ENCODE measurements at regions of chr10 and their contacts with region 1.

Region 1: GRCh38 chr10:93080350-93081046 is 6.8 kb downstream of the CYP26A1 start:
- DNase-seq: peak; percentile 37
- ATAC-seq: peak; percentile 92
- H3K4me3 ChIP-seq: no peak overlapping the region
- H3K27ac ChIP-seq: no peak overlapping the region
- H3K4me1 ChIP-seq: 0 out of 2 replicates have a peak, but pooled peaks cover 2% of the 10 kb centered on the region
- H3K27me3 ChIP-seq: peaks cover 25% of the 10 kb centered on the region
- CTCF ChIP-seq: peak; percentile 79
- POLR2A ChIP-seq: no peak
- RAD21 ChIP-seq: peak; percentile 83

Region 2: DNA sequence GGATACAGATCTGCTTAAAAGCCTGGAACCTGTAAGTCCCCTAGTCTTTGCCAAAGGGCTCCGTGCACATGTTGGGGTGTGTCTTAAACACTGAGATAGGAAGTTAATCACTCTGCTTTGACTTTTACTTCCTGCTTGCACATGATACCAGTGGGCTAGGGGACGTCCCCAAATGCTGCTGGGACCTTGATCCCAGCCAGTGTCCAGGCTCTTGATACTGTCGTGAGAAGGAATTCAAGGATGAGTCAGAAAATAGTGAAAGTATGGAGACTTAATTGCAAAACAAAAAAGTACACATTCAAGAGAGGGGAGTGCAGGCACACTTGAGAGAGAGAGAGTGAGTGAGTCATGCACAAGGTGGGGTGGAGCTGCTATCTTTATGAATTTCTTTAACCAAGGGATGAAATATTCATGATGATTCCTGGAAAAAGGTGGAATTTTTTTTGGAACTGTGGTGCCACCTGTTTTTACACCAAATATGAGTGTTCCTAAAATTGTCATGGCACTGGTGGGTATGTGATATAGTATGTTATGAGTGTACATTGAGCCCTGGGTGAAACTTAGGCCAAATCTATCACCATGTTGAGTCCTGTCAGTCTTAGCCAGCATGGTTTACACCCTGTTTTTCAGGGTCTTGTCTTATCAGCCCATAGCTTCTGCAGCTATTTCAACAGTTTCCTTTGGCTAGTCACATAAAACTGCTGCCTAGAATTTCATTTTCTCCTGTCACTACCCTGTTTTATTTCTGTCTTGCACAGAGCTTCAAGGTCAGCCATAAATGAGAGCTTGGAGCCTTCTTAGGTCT is 108.2 kb before region 1 on chr10:
- CTCF ChIA-PET with region 1: no interaction called
- POLR2A ChIA-PET with region 1: no interaction called
- dilution Hi-C with region 1: no loop called
- in situ Hi-C with region 1: no loop called
- intact Hi-C with region 1: no loop called
- DNase-seq: peak; percentile 90
- ATAC-seq: peak; percentile 91
- H3K4me3 ChIP-seq: no peak overlapping the region
- H3K27ac ChIP-seq: peak overlapping the region; percentile 16
- H3K4me1 ChIP-seq: peaks cover 15% of the 10 kb centered on the region
- H3K27me3 ChIP-seq: no peaks in the 10 kb centered on the region
- CTCF ChIP-seq: no peak
- POLR2A ChIP-seq: no peak
- RAD21 ChIP-seq: no peak

Region 3: DNA sequence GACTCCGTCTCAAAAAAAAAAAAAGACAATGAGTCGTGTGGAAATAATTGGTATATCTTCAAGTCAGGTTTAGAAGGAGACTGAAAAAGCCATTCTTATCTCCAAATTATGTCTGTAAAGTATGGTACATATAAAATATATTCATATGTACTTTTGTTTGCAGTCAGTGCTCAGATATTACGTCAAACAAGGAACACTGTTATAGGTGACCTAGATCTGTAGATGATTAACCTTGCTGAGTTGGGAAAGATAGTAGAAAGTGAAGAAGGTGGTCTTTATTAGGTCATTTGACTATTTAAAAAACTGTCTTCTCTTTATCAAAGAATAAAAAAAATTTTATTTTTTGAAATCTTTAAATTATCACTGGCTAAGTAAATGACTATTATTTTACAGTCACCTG is 64.8 kb before region 1 on chr10:
- CTCF ChIA-PET with region 1: no interaction called
- POLR2A ChIA-PET with region 1: no interaction called
- dilution Hi-C with region 1: no loop called
- in situ Hi-C with region 1: no loop called
- intact Hi-C with region 1: no loop called
- DNase-seq: no peak
- ATAC-seq: no peak
- H3K4me3 ChIP-seq: no peak overlapping the region
- H3K27ac ChIP-seq: no peak overlapping the region
- H3K4me1 ChIP-seq: no peaks in the 10 kb centered on the region
- H3K27me3 ChIP-seq: no peaks in the 10 kb centered on the region
- CTCF ChIP-seq: no peak
- POLR2A ChIP-seq: no peak
- RAD21 ChIP-seq: no peak

Region 4: DNA sequence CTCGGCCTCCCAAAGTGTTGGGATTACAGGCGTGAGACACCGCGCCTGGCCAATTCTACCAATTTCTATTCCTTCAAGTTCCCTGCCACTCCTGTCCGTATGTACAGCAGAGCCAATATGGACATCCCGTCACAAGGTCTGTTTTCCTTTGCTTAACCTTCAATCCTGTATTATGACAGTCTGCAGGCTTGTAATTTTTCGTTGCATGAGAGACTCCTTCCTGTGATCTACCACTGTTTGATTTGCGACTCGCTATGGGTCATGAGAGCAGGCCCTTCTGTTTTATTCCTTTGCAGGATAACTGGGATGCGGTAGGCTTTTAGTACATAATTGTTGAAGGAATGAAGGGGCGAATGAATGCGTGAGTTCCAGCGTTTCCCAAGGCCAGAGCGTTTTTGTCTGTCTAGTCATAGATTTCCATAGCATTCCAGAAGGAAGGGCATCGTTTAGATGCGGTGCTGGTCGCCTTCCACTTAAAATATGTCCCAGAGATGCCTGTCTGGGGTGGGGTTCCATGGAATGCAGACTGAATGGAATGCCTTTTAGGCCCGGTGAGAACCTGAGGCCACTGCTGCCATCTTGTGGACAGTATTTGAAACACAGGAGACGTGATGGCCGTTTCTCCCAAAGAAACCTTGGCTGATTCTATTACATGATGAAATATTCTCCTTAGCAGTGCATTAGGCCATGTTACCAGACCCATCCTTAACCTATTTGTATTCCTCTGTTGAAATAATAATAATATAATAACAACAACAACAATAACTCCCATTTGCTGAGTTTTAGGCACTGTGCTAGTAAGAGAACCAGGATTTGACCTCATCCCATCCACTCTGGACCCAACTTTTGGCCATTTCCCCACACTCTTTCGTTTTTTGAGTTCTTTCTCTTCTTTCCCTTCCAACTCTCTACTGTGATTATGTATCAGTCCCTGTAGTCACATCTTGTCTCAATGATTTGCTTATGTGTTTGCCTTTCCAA is 208.4 kb after region 1 on chr10:
- CTCF ChIA-PET with region 1: interaction called, 4 read pairs
- POLR2A ChIA-PET with region 1: no interaction called
- dilution Hi-C with region 1: no loop called
- in situ Hi-C with region 1: loop called (anchors 5 kb)
- intact Hi-C with region 1: loop called (anchors 1 kb)
- DNase-seq: peak; percentile 84
- ATAC-seq: peak; percentile 95
- H3K4me3 ChIP-seq: no peak overlapping the region
- H3K27ac ChIP-seq: 0 out of 2 replicates have a peak overlapping the region, but pooled peaks have one; percentile 7
- H3K4me1 ChIP-seq: no peaks in the 10 kb centered on the region
- H3K27me3 ChIP-seq: no peaks in the 10 kb centered on the region
- CTCF ChIP-seq: peak; percentile 86
- POLR2A ChIP-seq: no peak
- RAD21 ChIP-seq: peak; percentile 85

Region 5: GRCh38 chr10:93293999-93294398 is 213.5 kb after region 1 on chr10:
- CTCF ChIA-PET with region 1: interaction called, 4 read pairs
- POLR2A ChIA-PET with region 1: no interaction called
- dilution Hi-C with region 1: no loop called
- in situ Hi-C with region 1: loop called (anchors 5 kb)
- intact Hi-C with region 1: loop called (anchors 1 kb)
- DNase-seq: no peak
- ATAC-seq: no peak
- H3K4me3 ChIP-seq: no peak overlapping the region
- H3K27ac ChIP-seq: no peak overlapping the region
- H3K4me1 ChIP-seq: no peaks in the 10 kb centered on the region
- H3K27me3 ChIP-seq: no peaks in the 10 kb centered on the region
- CTCF ChIP-seq: no peak
- POLR2A ChIP-seq: no peak
- RAD21 ChIP-seq: no peak

Region 6: DNA sequence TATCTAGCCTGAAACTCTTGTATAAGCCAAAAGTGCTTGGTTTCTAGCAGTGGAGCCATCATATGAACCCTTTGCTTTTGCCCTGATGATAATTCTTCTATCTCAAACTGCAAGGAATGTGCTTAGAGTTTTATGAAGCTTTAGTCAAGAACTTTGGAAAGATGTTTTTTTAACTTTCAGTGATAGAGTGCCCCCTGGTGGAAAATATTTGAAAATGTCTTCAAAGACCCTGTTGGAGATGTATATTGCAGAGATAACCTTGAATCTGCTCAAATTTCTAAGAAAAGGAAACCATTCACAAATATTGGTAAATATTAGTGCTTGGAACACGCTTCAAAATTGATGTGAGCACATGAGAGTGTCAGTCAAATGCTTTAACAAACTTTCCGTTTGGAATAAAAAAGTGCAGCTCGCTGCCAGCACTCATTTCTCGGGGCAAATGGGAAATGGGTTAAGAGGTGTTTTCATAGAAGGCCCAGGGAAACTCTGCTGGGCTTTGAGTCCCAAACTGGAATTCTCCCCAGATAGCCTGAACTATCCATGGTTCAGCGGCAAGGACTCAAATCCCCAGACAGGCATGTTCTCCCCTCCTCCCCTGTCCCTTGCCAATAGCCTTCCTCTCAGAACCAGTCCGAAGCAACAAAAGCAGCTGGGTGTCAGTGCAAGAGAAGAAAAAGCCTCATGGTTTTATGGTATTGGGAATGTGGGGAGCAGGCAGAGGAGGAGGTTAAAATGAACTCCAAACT is 272.3 kb after region 1 on chr10:
- CTCF ChIA-PET with region 1: no interaction called
- POLR2A ChIA-PET with region 1: no interaction called
- dilution Hi-C with region 1: no loop called
- in situ Hi-C with region 1: no loop called
- intact Hi-C with region 1: loop called (anchors 2 kb)
- DNase-seq: peak; percentile 52
- ATAC-seq: peak; percentile 63
- H3K4me3 ChIP-seq: no peak overlapping the region
- H3K27ac ChIP-seq: no peak overlapping the region
- H3K4me1 ChIP-seq: 0 out of 2 replicates have a peak, but pooled peaks cover 1% of the 10 kb centered on the region
- H3K27me3 ChIP-seq: no peaks in the 10 kb centered on the region
- CTCF ChIP-seq: peak; percentile 60
- POLR2A ChIP-seq: no peak
- RAD21 ChIP-seq: 0 out of 2 replicates have a peak, but pooled peaks have one; percentile 21

Region 7: GRCh38 chr10:93509816-93510215 is 429.3 kb after region 1 on chr10:
- CTCF ChIA-PET with region 1: interaction called, 3 read pairs
- POLR2A ChIA-PET with region 1: no interaction called
- dilution Hi-C with region 1: no loop called
- in situ Hi-C with region 1: loop called (anchors 10 kb)
- intact Hi-C with region 1: loop called (anchors 2 kb)
- DNase-seq: no peak
- ATAC-seq: no peak
- H3K4me3 ChIP-seq: no peak overlapping the region
- H3K27ac ChIP-seq: no peak overlapping the region
- H3K4me1 ChIP-seq: peaks cover 5% of the 10 kb centered on the region
- H3K27me3 ChIP-seq: no peaks in the 10 kb centered on the region
- CTCF ChIP-seq: no peak
- POLR2A ChIP-seq: no peak
- RAD21 ChIP-seq: no peak

Region 8: GRCh38 chr10:93515071-93516005 is 434.8 kb after region 1 on chr10:
- CTCF ChIA-PET with region 1: interaction called, 3 read pairs
- POLR2A ChIA-PET with region 1: no interaction called
- dilution Hi-C with region 1: no loop called
- in situ Hi-C with region 1: loop called (anchors 10 kb)
- intact Hi-C with region 1: loop called (anchors 2 kb)
- DNase-seq: no peak
- ATAC-seq: no peak
- H3K4me3 ChIP-seq: no peak overlapping the region
- H3K27ac ChIP-seq: no peak overlapping the region
- H3K4me1 ChIP-seq: peaks cover 5% of the 10 kb centered on the region
- H3K27me3 ChIP-seq: no peaks in the 10 kb centered on the region
- CTCF ChIP-seq: no peak
- POLR2A ChIP-seq: no peak
- RAD21 ChIP-seq: no peak